ENCODE measurements at regions of chr4 and their contacts with region 1.

Region 1: DNA sequence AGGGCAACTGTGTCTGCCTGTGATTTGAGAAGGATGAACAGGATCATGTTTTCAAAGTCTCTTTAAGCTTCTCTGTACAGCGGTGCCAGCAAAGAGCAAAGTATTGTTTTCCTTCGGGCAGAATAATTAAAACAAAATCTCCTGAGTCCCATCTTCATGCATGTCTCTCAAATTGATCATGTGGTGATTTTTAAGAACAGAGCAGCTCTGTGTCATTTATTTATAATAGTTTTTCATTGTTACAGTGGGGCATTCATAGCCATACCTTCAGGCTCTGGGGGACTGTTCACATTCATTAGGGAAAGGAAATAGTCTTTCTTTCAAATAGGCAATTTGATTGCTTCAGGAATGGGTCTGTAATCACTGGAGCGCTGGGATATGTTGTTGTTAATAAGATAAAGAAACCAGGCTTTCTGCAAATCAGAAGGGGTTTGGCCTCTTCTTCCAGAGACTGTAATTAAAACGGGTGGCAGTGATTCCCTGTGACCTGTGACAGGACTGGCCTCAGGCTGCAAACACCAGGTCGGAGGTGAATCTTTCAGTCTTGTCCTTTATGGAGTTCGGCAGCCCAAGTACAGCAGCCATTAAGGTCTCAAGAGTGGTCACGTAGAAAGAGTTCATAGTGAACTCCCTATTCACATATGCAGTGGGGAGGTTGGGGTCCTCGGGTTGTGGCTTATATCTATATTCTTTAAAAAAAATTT is 29.3 kb upstream of the CBR4 start:
- DNase-seq: no peak

Region 2: DNA sequence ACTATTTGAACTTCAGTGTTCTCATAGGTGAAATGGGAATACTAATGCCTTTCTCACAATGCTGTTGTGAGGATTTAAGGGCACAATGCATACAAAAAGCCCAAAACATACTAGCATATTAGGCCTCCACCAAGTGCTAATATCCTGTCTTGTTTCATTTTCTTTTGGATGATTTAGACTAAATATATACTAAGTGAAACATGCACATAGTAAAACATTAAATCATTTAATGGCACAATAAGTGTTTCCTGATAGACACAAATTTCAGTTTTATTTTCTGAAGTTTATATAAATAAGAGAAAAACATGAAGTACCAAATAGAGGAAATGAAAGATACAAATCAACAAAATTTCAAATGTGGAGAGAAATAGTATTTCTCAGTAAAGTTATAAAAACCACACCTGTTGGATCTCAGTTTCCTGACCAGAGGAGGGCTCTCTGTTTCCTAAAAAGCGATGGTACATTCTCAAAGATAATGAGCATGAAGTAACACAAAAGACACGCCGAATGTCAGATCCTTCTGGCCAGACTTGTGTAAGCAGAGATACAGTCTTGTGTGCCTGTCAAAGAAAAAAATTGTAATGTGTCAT is 745.9 kb before region 1 on chr4:
- intact Hi-C with region 1: loop called in 1 of 2 experiments (anchors 5 kb)
- DNase-seq: no peak

Region 3: GRCh38 chr4:169054879-169055278 is 15.5 kb after region 1 on chr4:
- intact Hi-C with region 1: no loop called
- DNase-seq: no peak